ENCODE measurements at regions of chr3 and their contacts with region 1.

Region 1: GRCh38 chr3:172039436-172040077 is at the start of gene FNDC3B:
- DNase-seq: peak; percentile 91 to 96 (median 92)
- H3K4me3 ChIP-seq: peak within 1 kb of the TSS; percentile 84 to 97 (median 96)
- H3K4me3 Mint-ChIP-seq: peak within 1 kb of the TSS; percentile 88 to 93
- H3K27ac ChIP-seq: peak within 1 kb of the TSS; percentile 95 to 98
- H3K27ac Mint-ChIP-seq: peak within 1 kb of the TSS; percentile 92 to 97 (median 94)
- H3K4me1 ChIP-seq: peaks cover 47 to 60% of the 10 kb centered on the region in 2 donors
- H3K4me1 Mint-ChIP-seq: peaks cover 57% of the 10 kb centered on the region
- H3K27me3 ChIP-seq: no peaks in the 10 kb centered on the region
- H3K27me3 Mint-ChIP-seq: peaks cover 0 to 1% (median 0%) of the 10 kb centered on the region in 3 donors
- CTCF ChIP-seq: no peak
- polyA plus RNA-seq, gene FNDC3B: 19.6 to 36.1 (median 25.7) TPM

Region 2: GRCh38 chr3:171936191-171936841 is 103.2 kb before region 1 on chr3:
- intact Hi-C with region 1: loop called (anchors 5 to 10 kb)
- DNase-seq: peak; percentile 88 to 98 (median 98)
- H3K4me3 ChIP-seq: no peak overlapping the region
- H3K4me3 Mint-ChIP-seq: no peak overlapping the region
- H3K27ac ChIP-seq: peak overlapping the region; percentile 67 to 78
- H3K27ac Mint-ChIP-seq: peak overlapping the region; percentile 85 to 94 (median 93)
- H3K4me1 ChIP-seq: peaks cover 33 to 41% of the 10 kb centered on the region in 2 donors
- H3K4me1 Mint-ChIP-seq: peaks cover 45% of the 10 kb centered on the region
- H3K27me3 ChIP-seq: no peaks in the 10 kb centered on the region
- H3K27me3 Mint-ChIP-seq: no peaks in the 10 kb centered on the region
- CTCF ChIP-seq: no peak

Region 3: DNA sequence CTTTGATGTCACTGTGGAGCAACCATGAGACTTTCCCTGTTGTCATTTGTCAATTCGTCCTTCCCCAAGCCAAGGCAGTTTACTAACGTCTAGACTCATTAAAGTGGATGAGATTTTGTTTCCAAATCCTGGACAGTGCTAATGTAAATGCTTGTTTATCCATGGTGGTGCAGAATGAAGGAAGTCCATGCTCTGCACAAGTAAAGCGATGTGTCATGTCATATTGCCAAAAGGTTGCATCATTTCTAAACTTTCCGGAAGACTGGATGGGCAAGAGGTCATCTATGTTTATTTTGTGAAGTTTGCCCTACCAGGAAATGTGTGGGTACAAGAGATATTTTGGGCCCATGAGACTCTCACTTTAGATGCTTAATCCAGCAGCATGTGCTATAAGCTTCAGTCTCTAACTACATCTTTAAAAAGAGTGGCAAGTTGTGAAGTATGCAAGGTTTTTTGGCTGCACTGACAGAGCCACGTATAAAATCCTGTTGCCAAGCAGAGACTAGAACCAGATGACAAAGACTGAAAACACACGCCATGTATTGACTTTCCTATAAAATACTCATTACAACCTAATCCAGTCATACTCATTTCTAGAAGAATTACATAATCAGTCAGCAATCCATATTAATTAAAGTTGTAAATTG is 72.3 kb before region 1 on chr3:
- intact Hi-C with region 1: loop called in 1 of 2 experiments (anchors 5 kb)
- DNase-seq: peak; percentile 87 to 94 (median 93)
- H3K4me3 ChIP-seq: peak overlapping the region in 2 of 3 experiments; percentile 4 to 46
- H3K4me3 Mint-ChIP-seq: peak overlapping the region; percentile 16 to 40
- H3K27ac ChIP-seq: peak overlapping the region; percentile 79 to 93
- H3K27ac Mint-ChIP-seq: peak overlapping the region; percentile 93 to 97 (median 95)
- H3K4me1 ChIP-seq: peaks cover 63 to 66% of the 10 kb centered on the region in 2 donors
- H3K4me1 Mint-ChIP-seq: peaks cover 59% of the 10 kb centered on the region
- H3K27me3 ChIP-seq: no peaks in the 10 kb centered on the region
- H3K27me3 Mint-ChIP-seq: no peaks in the 10 kb centered on the region
- CTCF ChIP-seq: no peak

Region 4: DNA sequence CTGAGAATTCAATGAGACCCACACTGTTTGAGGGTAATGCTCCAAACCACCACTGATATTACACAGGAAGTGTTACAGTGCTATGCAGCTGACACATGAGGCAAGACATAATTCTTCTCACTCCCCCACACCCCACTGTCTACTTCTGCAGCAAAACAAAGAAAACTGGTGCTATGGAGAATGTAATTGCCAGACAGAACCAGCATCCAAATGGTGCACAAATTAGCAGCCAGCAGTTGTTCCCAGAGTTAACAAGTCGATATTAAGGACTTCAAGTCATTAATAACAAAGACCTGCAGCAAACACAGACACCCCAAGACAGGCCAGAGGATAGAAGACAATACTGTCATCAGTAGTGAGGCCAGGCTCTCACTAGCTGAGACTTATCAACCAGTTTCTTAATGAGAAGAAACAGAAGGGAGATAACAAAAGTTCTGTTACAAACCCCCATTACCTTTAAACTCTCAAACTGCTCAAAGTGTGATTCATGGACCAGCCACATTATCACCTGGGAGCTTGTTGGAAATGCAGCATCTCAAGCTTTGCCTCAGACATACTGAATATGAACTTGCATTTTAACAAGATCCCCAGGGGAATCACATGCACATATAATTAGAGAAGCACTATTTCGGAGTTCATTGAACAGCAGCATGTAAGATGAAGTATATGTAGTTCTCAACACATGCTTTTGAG is 58.8 kb before region 1 on chr3:
- intact Hi-C with region 1: loop called in 1 of 2 experiments (anchors 10 kb)
- DNase-seq: peak; percentile 36 to 59 (median 46)
- H3K4me3 ChIP-seq: peak overlapping the region in 1 of 3 experiments; percentile 1
- H3K4me3 Mint-ChIP-seq: no peak overlapping the region
- H3K27ac ChIP-seq: peak overlapping the region in 1 of 2 donors; percentile 85
- H3K27ac Mint-ChIP-seq: peak overlapping the region in 6 of 7 donors; percentile 78 to 91 (median 84)
- H3K4me1 ChIP-seq: peaks cover 91 to 100% of the 10 kb centered on the region in 2 donors
- H3K4me1 Mint-ChIP-seq: peaks cover 75% of the 10 kb centered on the region
- H3K27me3 ChIP-seq: no peaks in the 10 kb centered on the region
- H3K27me3 Mint-ChIP-seq: no peaks in the 10 kb centered on the region
- CTCF ChIP-seq: no peak

Region 5: GRCh38 chr3:172106989-172107388 is 67.4 kb after region 1 on chr3:
- intact Hi-C with region 1: loop called in 1 of 2 experiments (anchors 5 kb)
- DNase-seq: peak; percentile 68 to 87 (median 79)
- H3K4me3 ChIP-seq: peak overlapping the region in 2 of 3 experiments; percentile 29 to 53
- H3K4me3 Mint-ChIP-seq: peak overlapping the region; percentile 71 to 86
- H3K27ac ChIP-seq: peak overlapping the region; percentile 51 to 76
- H3K27ac Mint-ChIP-seq: peak overlapping the region; percentile 90 to 97 (median 95)
- H3K4me1 ChIP-seq: peaks cover 56 to 67% of the 10 kb centered on the region in 2 donors
- H3K4me1 Mint-ChIP-seq: peaks cover 73% of the 10 kb centered on the region
- H3K27me3 ChIP-seq: no peaks in the 10 kb centered on the region
- H3K27me3 Mint-ChIP-seq: peaks cover 0 to 2% (median 0%) of the 10 kb centered on the region in 3 donors
- CTCF ChIP-seq: no peak

Region 6: DNA sequence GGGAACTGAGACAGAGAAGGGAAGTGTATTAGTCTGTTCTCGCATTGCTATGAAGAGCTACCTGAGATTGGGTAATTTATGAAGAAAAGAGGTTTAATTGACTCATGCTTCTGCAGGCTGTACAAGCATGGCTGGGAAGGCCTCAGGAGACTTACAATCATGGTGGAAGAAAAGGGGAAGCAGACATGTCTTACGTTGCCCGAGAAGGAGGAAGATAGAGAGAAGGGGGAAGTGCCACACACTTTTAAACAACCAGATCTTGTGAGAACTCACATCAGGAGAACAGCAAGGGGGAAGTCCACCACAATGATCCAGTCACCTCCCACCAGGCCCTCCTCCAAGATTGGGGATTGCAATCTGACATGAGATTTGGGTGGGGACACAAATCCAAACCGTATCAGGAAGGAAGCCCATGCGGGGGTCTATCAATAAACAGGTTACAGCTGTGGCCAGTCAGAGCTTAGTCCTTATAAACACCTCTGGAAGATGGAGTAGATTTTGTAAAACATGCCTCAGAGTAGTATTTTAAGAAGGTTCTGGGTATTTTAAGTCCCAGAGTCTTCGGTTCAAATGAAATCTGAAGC is 254.8 kb after region 1 on chr3:
- intact Hi-C with region 1: loop called in 1 of 2 experiments (anchors 5 kb)
- DNase-seq: peak; percentile 80 to 96 (median 82)
- H3K4me3 ChIP-seq: no peak overlapping the region
- H3K4me3 Mint-ChIP-seq: no peak overlapping the region
- H3K27ac ChIP-seq: peak overlapping the region; percentile 12 to 82
- H3K27ac Mint-ChIP-seq: peak overlapping the region; percentile 87 to 95 (median 93)
- H3K4me1 ChIP-seq: no peaks in the 10 kb centered on the region
- H3K4me1 Mint-ChIP-seq: peaks cover 7% of the 10 kb centered on the region
- H3K27me3 ChIP-seq: no peaks in the 10 kb centered on the region
- H3K27me3 Mint-ChIP-seq: no peaks in the 10 kb centered on the region
- CTCF ChIP-seq: no peak